Breast epithelium (tissue), 4 donors: ENCODE measurements at regions of chr6 and their contacts with region 1.

Region 1: DNA sequence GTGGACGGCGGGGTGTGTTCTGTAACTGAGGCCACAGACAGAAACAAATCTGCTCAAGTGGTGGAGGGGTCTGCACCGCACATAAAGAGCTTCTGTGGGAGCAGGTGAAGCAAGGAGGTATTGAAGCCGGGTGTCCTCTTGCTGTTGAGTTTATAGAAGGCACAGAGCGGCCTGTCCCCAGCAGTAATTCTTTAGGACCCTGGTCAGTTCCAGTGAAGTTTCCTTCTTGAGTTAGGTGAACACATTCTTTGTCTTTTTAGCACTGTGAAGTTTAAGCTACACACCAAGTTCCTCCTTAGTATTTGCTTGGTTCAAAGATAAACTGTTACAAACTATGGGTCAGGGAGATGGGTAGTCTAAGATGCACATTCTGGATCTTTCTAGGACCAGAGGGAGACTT is 6.1 kb downstream of the PRDM1 start:
- DNase-seq: no peak
- H3K4me3 ChIP-seq: no peak overlapping the region
- H3K27ac ChIP-seq: no peak overlapping the region
- H3K4me1 ChIP-seq: no peaks in the 10 kb centered on the region
- H3K27me3 ChIP-seq: no peaks in the 10 kb centered on the region
- CTCF ChIP-seq: no peak
- POLR2A ChIP-seq: no peak

Region 2: GRCh38 chr6:104449918-104450317 is 1642.4 kb before region 1 on chr6:
- intact Hi-C with region 1: no loop called
- DNase-seq: no peak
- H3K4me3 ChIP-seq: no peak overlapping the region
- H3K27ac ChIP-seq: no peak overlapping the region
- H3K4me1 ChIP-seq: no peaks in the 10 kb centered on the region
- H3K27me3 ChIP-seq: no peaks in the 10 kb centered on the region
- CTCF ChIP-seq: no peak
- POLR2A ChIP-seq: no peak

Region 3: DNA sequence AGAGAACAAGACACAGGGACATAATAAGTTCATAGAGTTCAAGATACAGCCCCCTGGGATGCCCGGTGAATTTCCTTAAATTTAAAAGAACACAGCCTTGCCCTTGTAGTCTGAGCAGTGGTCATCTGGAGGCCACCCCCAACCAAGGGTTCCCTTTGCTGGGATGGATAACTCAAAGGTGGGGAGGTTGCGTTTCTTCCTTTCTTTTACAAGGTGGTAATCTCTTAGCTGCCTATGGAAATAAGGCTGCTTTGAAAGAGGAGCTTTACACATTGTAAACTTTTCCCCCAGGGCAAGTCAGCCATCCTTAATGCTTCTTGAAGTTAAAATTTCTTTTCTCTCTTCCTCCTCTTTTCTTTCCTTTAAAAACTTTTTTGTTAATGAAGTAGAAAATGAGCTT is 77.3 kb before region 1 on chr6:
- intact Hi-C with region 1: loop called (anchors 2 kb)
- DNase-seq: no peak
- H3K4me3 ChIP-seq: no peak overlapping the region
- H3K27ac ChIP-seq: no peak overlapping the region
- H3K4me1 ChIP-seq: no peaks in the 10 kb centered on the region
- H3K27me3 ChIP-seq: no peaks in the 10 kb centered on the region
- CTCF ChIP-seq: no peak
- POLR2A ChIP-seq: no peak